Panc1 (cell line): ENCODE measurements at regions of chr4 and their contacts with region 1.

Region 1: GRCh38 chr4:173252024-173252935 is 81.9 kb downstream of the HMGB2 start:
- DNase-seq: peak; percentile 95
- ATAC-seq: peak; percentile 96
- H3K4me3 ChIP-seq: 0 out of 4 replicates have a peak overlapping the region, but pooled peaks of 1 of the 2 experiments have one; percentile 6
- H3K27ac ChIP-seq: peak overlapping the region; percentile 98
- H3K4me1 ChIP-seq: peaks cover 76% of the 10 kb centered on the region
- H3K27me3 ChIP-seq: no peaks in the 10 kb centered on the region
- CTCF ChIP-seq: no peak

Region 2: DNA sequence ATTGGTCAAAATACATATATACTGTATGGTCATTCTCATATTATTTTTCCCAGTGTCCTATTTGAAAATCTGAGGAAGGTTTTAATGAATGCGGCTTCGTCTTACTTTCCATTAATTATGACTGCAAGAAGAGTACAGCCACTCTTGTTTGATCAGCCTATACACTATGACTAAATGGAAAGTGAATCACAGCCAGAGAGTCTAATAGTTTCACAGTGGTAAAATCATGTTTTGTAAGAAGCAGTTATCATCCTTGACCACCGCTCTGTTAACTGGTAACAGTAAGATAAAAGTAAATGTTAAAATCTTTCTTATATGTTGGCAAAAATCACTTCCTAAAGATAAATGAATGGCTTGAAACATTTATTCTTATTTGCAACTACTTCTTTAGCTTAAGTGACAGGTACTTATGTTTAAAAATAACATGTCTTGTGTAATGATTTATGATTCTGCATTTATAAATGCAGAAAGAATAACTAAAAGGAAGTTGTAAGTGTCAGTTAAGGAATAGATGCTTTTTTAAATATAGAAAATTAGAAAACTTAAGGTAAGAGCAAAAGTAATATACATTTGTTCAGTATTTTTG is 70.4 kb before region 1 on chr4:
- CTCF ChIA-PET with region 1: no interaction called
- POLR2A ChIA-PET with region 1: no interaction called
- in situ Hi-C with region 1: no loop called
- intact Hi-C with region 1: loop called (anchors 5 kb)
- DNase-seq: no peak
- ATAC-seq: peak; percentile 64; the same call in 1 of the 2 replicates
- H3K4me3 ChIP-seq: peak overlapping the region in 1 of 2 experiments; percentile 10; a peak in 2 of 4 replicates
- H3K27ac ChIP-seq: peak overlapping the region; percentile 98
- H3K4me1 ChIP-seq: peaks cover 79% of the 10 kb centered on the region
- H3K27me3 ChIP-seq: no peaks in the 10 kb centered on the region
- CTCF ChIP-seq: no peak

Region 3: DNA sequence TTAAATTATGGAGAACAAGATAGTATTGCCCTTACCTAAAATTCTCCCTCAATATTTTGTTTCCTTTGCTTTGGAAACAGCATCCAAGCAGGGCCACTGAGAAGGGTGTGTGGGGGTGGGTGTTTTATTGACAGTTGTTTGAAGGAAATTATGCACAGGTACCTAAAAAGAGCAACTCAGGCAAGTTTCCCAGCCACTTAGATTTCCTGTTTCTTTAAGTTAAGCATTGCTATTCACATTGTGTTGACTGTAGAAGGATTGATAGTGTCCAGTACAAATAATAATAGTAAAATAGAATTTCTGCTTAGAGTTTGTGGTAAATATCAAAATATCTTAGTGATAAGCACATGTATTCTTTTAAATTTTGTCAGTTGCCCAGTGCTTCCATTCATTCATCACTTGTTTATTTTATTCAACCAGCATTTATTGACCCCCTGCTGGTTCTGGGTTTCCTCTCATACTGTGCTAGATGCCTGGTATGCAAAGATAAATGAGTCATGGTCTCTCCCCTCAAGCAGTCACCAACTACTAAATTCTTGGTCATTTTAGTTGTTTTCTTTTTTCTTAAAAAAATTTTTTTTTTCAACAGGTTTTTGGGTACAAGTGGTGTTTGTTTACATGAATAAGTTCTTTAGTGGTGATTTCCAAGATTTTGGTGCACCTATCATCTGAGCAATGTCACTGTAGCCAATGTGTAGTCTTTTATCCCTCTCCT is 33.7 kb before region 1 on chr4:
- CTCF ChIA-PET with region 1: no interaction called
- POLR2A ChIA-PET with region 1: no interaction called
- in situ Hi-C with region 1: no loop called
- intact Hi-C with region 1: loop called (anchors 5 kb)
- DNase-seq: no peak
- ATAC-seq: peak; percentile 95
- H3K4me3 ChIP-seq: no peak overlapping the region
- H3K27ac ChIP-seq: peak overlapping the region; percentile 99
- H3K4me1 ChIP-seq: peaks cover 41% of the 10 kb centered on the region
- H3K27me3 ChIP-seq: no peaks in the 10 kb centered on the region
- CTCF ChIP-seq: no peak

Region 4: GRCh38 chr4:173270312-173271027 is 18.2 kb after region 1 on chr4:
- CTCF ChIA-PET with region 1: no interaction called
- POLR2A ChIA-PET with region 1: no interaction called
- in situ Hi-C with region 1: no loop called
- intact Hi-C with region 1: no loop called
- DNase-seq: no peak
- ATAC-seq: peak; percentile 68; the same call in 1 of the 2 replicates
- H3K4me3 ChIP-seq: no peak overlapping the region
- H3K27ac ChIP-seq: peak overlapping the region; percentile 75
- H3K4me1 ChIP-seq: peaks cover 23% of the 10 kb centered on the region
- H3K27me3 ChIP-seq: no peaks in the 10 kb centered on the region
- CTCF ChIP-seq: no peak

Region 5: DNA sequence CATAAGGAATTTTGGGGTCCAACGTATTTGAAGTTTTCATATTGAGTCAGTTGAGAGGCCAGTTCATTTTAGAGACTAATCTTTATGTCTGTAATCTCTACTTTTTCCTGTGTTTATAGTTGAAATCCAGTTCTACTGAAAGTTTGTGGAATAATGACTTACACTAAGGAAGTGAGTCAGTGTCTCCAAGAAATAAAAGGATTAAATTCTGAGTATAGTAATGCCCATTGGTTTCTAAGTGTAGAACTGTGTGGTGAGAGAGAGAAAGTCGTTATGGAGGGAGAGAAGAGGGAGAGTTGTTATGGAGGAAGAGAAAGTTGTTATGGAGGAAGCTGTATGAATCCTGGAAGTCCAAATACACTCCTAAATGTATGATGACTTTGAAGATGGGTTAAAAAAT is 542.4 kb after region 1 on chr4:
- CTCF ChIA-PET with region 1: no interaction called
- POLR2A ChIA-PET with region 1: no interaction called
- in situ Hi-C with region 1: no loop called
- intact Hi-C with region 1: no loop called
- DNase-seq: no peak
- ATAC-seq: no peak
- H3K4me3 ChIP-seq: no peak overlapping the region
- H3K27ac ChIP-seq: no peak overlapping the region
- H3K4me1 ChIP-seq: no peaks in the 10 kb centered on the region
- H3K27me3 ChIP-seq: no peaks in the 10 kb centered on the region
- CTCF ChIP-seq: no peak